Activated T-helper 2 cell treated with anti-CD3 and anti-CD28 coated beads, Interferon-gamma antibody, Interleukin-2, Interleukin-4, amounts not matched to agents 10 μg/mL and 5 μg/mL and 100 μg/mL, durations not matched to agents 14 hours and 24 hours and 36 hours (primary cell): ENCODE measurements at regions of chr17 and their contacts with region 1.

Region 1: DNA sequence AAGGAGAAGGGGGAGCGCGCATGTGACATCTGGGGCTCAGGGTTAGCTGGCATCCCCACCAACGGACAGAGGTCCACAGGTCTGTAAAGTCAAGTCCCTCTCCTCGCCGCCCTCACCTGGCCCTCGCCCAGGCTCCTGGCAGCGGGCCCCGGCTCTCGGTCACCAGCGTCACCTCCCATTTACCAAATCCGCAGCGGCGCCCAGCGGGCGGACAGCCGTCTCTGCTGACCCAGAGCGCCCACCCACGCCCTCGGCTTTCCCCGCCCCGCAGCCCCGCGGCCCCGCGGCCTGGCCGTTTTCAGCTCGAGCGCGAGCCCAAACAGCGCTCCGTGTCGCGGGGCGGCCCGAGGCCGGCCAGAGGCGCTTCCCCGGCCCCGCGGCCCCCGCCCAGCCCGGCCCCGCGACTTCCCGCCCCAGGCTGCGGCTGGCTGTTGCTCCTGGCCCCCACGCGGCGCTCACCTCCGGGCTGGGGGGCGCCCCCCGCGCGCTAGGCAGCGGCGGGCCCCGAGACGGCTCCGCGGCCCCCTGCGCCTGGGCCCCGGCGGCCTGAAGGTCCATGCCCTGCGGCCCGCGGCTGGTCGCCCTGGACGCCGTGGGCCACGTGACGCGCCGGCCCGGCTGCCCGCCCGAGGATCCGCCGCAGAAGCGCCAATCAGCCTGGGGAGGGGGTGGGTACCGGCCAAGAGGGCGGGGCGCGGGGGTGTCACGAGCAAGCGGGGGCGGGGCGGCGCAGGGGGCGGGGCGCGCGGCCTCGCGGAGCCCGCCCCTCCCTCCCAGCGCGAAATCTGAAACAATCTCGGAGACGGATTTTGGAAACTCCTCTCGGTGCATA is at the start of gene COPRS:
- DNase-seq: peak; percentile 70
- H3K4me3 Mint-ChIP-seq: peak within 1 kb of the TSS; percentile 81
- H3K27ac Mint-ChIP-seq: peak within 1 kb of the TSS; percentile 54
- H3K4me1 Mint-ChIP-seq: peaks cover 20% of the 10 kb centered on the region
- H3K27me3 Mint-ChIP-seq: no peaks in the 10 kb centered on the region
- total RNA-seq, gene COPRS: 59.7 and 64.2 TPM in 2 replicates

Region 2: GRCh38 chr17:31475378-31476162 is 383.3 kb before region 1 on chr17:
- intact Hi-C with region 1: no loop called
- DNase-seq: no peak
- H3K4me3 Mint-ChIP-seq: no peak overlapping the region
- H3K27ac Mint-ChIP-seq: no peak overlapping the region
- H3K4me1 Mint-ChIP-seq: peaks cover 1% of the 10 kb centered on the region
- H3K27me3 Mint-ChIP-seq: peaks cover 13% of the 10 kb centered on the region

Region 3: DNA sequence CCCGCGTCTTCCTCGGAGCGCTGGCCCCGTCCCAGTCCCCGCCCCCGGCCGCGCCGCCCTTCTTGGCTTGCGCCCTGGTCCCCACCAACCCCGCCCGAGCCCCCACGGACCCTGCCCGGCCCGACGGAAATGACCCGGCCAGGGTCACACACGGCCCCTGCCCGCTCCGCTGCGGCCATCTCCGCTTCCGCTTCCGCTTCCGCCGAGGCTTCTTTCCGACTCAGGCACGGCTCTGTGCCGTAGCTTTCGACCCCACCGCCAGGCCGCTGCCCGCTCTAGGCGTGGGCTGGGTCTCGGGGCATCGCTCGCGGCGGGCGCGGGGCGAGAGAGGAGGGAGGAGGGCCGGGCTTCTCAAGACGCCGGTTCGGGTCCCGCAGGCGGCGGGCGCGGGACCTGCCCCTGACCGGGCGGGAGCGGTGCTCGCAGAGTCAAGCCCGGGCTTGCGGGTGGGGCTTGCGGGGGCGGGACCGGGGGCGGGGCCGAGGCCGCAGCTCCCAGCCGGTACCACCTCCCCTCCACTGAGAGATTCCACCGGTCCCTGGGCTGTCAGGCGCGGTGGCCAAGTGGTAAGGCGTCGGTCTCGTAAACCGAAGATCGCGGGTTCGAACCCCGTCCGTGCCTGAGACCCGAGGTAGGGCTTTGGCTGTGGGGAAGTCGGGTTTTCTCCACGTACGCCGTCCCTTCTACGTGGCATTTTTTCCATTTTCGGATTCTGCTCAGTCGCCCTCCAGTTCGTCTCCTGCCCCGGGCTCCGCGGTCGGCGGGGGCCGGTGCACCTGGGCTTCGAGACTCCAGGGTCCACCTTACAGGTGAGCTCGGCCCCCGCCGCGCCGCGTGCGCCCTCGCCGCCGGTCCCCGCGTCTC is 309.1 kb before region 1 on chr17:
- intact Hi-C with region 1: loop called (anchors 5 kb)
- DNase-seq: peak; percentile 87
- H3K4me3 Mint-ChIP-seq: peak overlapping the region; percentile 85
- H3K27ac Mint-ChIP-seq: peak overlapping the region; percentile 80
- H3K4me1 Mint-ChIP-seq: peaks cover 20% of the 10 kb centered on the region
- H3K27me3 Mint-ChIP-seq: peaks cover 15% of the 10 kb centered on the region

Region 4: DNA sequence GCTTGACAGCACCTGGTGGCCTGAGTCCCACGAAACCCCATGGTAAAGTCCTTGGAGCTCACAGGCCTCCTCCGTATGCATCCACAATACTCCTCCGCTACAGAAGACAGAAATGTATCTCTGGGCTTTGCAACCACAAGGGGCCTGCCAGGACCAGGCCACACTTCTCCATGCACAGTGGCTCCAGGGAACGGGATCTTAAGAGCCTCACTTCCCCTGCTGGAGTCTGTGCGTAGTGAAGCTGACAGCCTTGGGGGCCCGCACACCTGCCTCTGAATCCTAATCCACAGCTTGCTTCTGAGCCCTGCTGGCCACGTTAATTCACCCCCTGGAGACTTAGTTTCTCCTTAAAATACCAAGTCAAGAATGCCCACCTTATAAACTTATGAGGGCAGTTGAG is 125.5 kb before region 1 on chr17:
- intact Hi-C with region 1: no loop called
- DNase-seq: no peak
- H3K4me3 Mint-ChIP-seq: no peak overlapping the region
- H3K27ac Mint-ChIP-seq: no peak overlapping the region
- H3K4me1 Mint-ChIP-seq: no peaks in the 10 kb centered on the region
- H3K27me3 Mint-ChIP-seq: no peaks in the 10 kb centered on the region

Region 5: GRCh38 chr17:31758646-31759045 is 100.2 kb before region 1 on chr17:
- intact Hi-C with region 1: no loop called
- DNase-seq: no peak
- H3K4me3 Mint-ChIP-seq: no peak overlapping the region
- H3K27ac Mint-ChIP-seq: no peak overlapping the region
- H3K4me1 Mint-ChIP-seq: no peaks in the 10 kb centered on the region
- H3K27me3 Mint-ChIP-seq: peaks cover 11% of the 10 kb centered on the region

Region 6: DNA sequence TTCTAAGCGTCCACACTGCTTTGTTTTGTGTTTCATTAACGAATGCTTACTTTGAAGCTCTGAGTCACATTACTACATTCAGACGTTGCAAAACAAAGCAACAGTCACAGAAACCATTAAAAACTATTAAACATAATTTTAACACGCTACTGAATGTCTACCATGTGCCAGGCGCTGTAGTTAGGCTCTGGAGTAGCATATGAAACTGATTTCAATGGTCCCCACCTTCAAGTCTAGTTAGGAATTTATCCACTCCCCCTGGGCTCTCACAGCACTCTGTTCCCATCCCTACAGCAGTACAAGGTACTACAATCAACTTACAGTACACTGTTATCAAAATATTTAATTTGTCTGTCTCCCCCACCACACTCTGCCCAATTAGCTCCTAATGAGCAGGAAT is 42.0 kb after region 1 on chr17:
- intact Hi-C with region 1: loop called (anchors 2 kb)
- DNase-seq: no peak
- H3K4me3 Mint-ChIP-seq: no peak overlapping the region
- H3K27ac Mint-ChIP-seq: no peak overlapping the region
- H3K4me1 Mint-ChIP-seq: peaks cover 10% of the 10 kb centered on the region
- H3K27me3 Mint-ChIP-seq: no peaks in the 10 kb centered on the region